ENCODE measurements at regions of chr3 and their contacts with region 1.

Region 1: DNA sequence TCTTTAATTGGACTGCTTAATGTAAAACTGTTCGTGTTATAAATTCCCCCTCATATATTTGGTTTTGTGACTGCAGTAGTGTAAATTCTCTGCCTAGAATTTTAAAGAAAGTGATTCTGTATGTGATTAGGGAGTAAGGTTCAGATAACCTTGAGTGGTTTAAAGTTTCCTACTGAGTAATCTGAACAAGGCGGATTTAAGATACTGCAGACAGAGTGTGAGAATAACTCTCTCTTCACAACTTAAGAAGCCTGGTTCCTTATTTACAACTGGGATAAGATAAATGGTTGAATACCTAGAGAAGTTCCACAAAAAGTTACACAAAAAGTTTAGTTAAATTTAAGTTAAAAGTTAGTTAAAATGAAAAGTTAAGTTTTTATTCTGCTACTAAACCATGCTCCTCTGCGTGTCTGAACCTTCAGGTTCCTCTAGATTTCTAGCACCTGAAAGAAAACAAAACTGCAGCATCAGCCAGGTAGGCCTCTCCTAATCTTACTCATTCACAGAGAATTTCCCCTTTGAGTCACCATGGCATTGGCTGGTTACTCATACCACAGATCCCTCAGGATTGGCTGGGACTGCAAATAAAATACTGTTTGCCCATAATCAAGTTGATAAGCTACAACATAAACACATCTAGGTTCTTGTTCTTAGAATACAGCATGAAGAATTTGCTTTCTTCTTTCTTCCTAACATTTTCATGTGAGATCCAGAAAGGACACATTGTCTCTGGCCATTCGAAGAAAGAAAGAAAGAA is at the start of gene ARL14:
- DNase-seq: peak; percentile 87
- H3K4me3 Mint-ChIP-seq: peak within 1 kb of the TSS; percentile 83
- H3K27ac Mint-ChIP-seq: peak within 1 kb of the TSS; percentile 95
- H3K4me1 Mint-ChIP-seq: peaks cover 68% of the 10 kb centered on the region
- H3K27me3 Mint-ChIP-seq: no peaks in the 10 kb centered on the region
- CTCF ChIP-seq: no peak
- total RNA-seq, gene ARL14: 104 and 197 TPM in 2 replicates

Region 2: GRCh38 chr3:160399125-160400029 is 277.3 kb before region 1 on chr3 and contains the starts of genes IFT80 and SMC4:
- CTCF ChIA-PET with region 1: no interaction called
- intact Hi-C with region 1: loop called (anchors 10 kb)
- DNase-seq: peak; percentile 99
- H3K4me3 Mint-ChIP-seq: peak within 1 kb of the TSS; percentile 98
- H3K27ac Mint-ChIP-seq: peak within 1 kb of the TSS; percentile 98
- H3K4me1 Mint-ChIP-seq: peaks cover 41% of the 10 kb centered on the region
- H3K27me3 Mint-ChIP-seq: no peaks in the 10 kb centered on the region
- CTCF ChIP-seq: no peak
- total RNA-seq, gene IFT80: 58.0 and 61.8 TPM in 2 replicates
- total RNA-seq, gene SMC4: 231 and 256 TPM in 2 replicates

Region 3: GRCh38 chr3:160498202-160498601 is 178.5 kb before region 1 on chr3:
- CTCF ChIA-PET with region 1: no interaction called
- intact Hi-C with region 1: no loop called
- DNase-seq: no peak
- H3K4me3 Mint-ChIP-seq: no peak overlapping the region
- H3K27ac Mint-ChIP-seq: no peak overlapping the region
- H3K4me1 Mint-ChIP-seq: no peaks in the 10 kb centered on the region
- H3K27me3 Mint-ChIP-seq: no peaks in the 10 kb centered on the region
- CTCF ChIP-seq: no peak

Region 4: DNA sequence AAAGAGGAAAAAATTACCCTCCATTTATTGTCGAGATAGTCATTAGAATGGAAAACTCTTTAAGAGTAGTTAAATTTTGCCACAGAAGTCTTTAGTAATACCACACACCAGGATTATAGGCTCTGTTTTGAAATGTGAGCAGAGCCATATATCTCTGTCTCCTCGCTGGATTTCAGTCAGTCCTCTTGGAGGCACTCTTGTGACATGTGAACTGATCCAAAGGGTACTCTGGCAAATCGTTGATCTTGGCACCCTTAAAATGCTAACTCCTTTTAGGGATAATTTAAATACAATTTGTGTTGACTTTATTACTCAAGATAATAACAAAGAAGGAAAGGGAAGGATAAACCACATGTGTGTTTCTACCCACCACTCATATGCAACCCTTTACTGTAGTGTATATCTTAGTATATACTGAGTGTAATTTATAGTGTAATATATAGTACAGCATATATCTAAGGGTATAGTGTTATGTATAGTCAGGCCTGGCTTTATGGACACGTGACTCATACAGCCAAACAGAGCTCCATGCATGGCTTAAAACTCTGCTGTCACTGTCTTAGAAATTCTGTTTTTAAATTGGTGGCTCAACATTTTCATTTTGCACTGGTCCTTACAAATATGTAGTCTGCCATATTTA is 99.0 kb before region 1 on chr3:
- CTCF ChIA-PET with region 1: interaction called, 5 read pairs
- intact Hi-C with region 1: loop called (anchors 2 kb)
- DNase-seq: peak; percentile 53
- H3K4me3 Mint-ChIP-seq: no peak overlapping the region
- H3K27ac Mint-ChIP-seq: no peak overlapping the region
- H3K4me1 Mint-ChIP-seq: peaks cover 10% of the 10 kb centered on the region
- H3K27me3 Mint-ChIP-seq: no peaks in the 10 kb centered on the region
- CTCF ChIP-seq: peak; percentile 38

Region 5: DNA sequence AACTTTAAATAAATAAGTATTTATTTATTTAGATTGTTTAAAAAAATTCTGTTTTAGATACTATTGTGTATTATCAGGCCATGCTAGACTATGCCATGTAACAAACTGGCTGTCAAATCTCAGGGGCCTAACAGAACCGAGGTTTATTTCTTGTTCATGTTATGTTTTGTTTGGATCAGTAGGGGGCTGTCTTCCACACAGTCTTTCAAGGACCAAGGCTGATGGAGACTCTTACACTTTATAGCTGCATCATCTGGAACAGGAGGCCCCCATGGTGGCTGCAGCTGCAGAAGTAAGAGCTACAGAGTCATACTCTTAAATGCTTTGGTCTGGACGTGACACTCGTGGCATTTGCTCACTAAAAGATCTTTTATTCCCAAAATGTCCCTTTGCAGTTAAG is 32.7 kb before region 1 on chr3:
- CTCF ChIA-PET with region 1: interaction called, 8 read pairs
- intact Hi-C with region 1: loop called (anchors 2 kb)
- DNase-seq: no peak
- H3K4me3 Mint-ChIP-seq: no peak overlapping the region
- H3K27ac Mint-ChIP-seq: no peak overlapping the region
- H3K4me1 Mint-ChIP-seq: peaks cover 41% of the 10 kb centered on the region
- H3K27me3 Mint-ChIP-seq: no peaks in the 10 kb centered on the region
- CTCF ChIP-seq: peak; percentile 13

Region 6: DNA sequence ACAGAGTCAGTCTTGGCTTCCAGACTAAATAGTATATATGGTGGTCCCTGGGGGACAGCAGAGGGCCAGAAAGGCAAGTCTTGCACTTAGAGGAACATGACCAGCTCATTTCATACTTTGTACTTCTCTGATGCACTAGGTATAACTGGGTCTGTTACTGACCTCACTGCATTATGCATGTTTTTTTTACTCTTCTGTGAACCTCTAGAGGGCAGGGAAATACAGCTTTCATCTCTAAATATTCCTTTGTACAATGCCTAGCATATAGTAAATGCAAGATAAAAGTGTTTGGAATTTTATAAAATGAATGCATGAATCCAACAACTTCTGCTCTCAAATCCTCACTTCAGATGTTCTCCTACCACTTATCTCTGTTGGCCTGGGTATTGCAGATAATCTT is 23.2 kb before region 1 on chr3:
- CTCF ChIA-PET with region 1: interaction called, 15 read pairs
- intact Hi-C with region 1: no loop called
- DNase-seq: no peak
- H3K4me3 Mint-ChIP-seq: no peak overlapping the region
- H3K27ac Mint-ChIP-seq: no peak overlapping the region
- H3K4me1 Mint-ChIP-seq: peaks cover 25% of the 10 kb centered on the region
- H3K27me3 Mint-ChIP-seq: no peaks in the 10 kb centered on the region
- CTCF ChIP-seq: no peak

Region 7: GRCh38 chr3:160665784-160666526 is 10.8 kb before region 1 on chr3:
- CTCF ChIA-PET with region 1: interaction called, 7 read pairs
- intact Hi-C with region 1: loop called (anchors 1 kb)
- DNase-seq: peak; percentile 82
- H3K4me3 Mint-ChIP-seq: peak overlapping the region; percentile 18
- H3K27ac Mint-ChIP-seq: peak overlapping the region; percentile 90
- H3K4me1 Mint-ChIP-seq: peaks cover 57% of the 10 kb centered on the region
- H3K27me3 Mint-ChIP-seq: no peaks in the 10 kb centered on the region
- CTCF ChIP-seq: no peak

Measured in Calu3 (cell line).